ENCODE measurements at regions of chr17 and their contacts with region 1.

Region 1: DNA sequence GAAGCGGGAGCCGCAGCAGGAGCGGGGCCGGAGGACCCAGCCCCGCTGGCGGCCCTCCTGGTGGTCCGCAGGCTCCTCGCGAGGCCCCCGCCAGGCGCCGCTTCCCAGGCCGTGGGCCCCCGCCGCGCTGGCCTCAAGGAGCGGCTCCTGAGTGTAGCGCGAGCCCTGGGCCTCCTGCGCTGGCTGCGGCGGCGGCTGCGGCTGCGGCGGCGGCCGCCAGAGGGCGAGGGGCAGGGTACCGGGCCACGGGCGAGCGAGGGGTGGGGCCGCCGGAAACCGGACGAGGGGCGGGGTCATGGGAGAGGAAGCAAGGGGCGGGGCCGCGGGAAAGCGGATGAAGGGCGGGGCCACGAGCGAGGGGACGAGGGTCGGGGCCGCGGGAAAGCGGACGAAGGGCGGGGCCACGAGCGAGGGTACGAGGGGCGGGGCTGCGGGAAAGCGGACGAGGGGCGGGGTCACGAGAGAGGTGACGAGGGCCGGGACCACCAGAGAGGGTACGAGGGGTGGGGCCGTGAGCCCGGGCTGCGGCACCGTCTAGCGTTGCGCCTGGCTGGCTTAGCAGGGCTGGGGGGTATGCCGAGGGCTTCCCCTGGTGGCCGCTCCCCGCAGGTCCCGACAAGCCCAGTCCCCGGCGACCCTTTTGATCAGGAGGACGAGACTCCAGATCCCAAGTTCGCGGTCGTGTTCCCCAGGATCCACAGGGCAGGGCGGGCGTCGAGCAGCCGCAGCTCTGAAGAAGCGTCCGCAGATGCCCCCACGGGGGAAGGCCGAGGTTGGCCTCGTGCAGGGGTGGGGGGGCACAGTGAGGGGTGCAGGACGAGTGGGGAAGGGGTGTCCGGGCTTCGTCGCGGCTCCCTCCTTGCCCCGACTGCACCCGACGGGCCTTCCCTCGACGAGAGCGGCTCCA is 1.7 kb downstream of the MYO15B start:
- DNase-seq: peak; percentile 64
- ATAC-seq: peak; percentile 97
- H3K4me3 ChIP-seq: peak overlapping the region; percentile 59
- H3K27ac ChIP-seq: peak overlapping the region; percentile 20; the same call in 1 of the 2 replicates
- H3K4me1 ChIP-seq: no peaks in the 10 kb centered on the region
- H3K27me3 ChIP-seq: peaks cover 29% of the 10 kb centered on the region
- CTCF ChIP-seq: peak; percentile 64
- POLR2A ChIP-seq: no peak
- RAD21 ChIP-seq: peak; percentile 32

Region 2: GRCh38 chr17:75515496-75516254 is 73.6 kb before region 1 on chr17 and contains the start of gene CASKIN2:
- CTCF ChIA-PET with region 1: no interaction called
- POLR2A ChIA-PET with region 1: interaction called, 3 read pairs
- dilution Hi-C with region 1: no loop called
- in situ Hi-C with region 1: no loop called
- intact Hi-C with region 1: loop called (anchors 2 kb)
- DNase-seq: peak; percentile 86
- ATAC-seq: peak; percentile 79
- H3K4me3 ChIP-seq: peak within 1 kb of the TSS; percentile 82
- H3K27ac ChIP-seq: peak within 1 kb of the TSS; percentile 51
- H3K4me1 ChIP-seq: peaks cover 10% of the 10 kb centered on the region; the same call in 1 of the 2 replicates
- H3K27me3 ChIP-seq: no peaks in the 10 kb centered on the region
- CTCF ChIP-seq: peak; percentile 100
- POLR2A ChIP-seq: no peak
- RAD21 ChIP-seq: peak; percentile 82
- total RNA-seq, gene CASKIN2: 2.2 and 2.9 TPM in 2 replicates

Region 3: GRCh38 chr17:76072148-76072858 is 483.0 kb after region 1 on chr17 and contains the start of gene SRP68:
- CTCF ChIA-PET with region 1: no interaction called
- POLR2A ChIA-PET with region 1: no interaction called
- dilution Hi-C with region 1: no loop called
- in situ Hi-C with region 1: no loop called
- intact Hi-C with region 1: no loop called
- DNase-seq: peak; percentile 91
- ATAC-seq: peak; percentile 100
- H3K4me3 ChIP-seq: peak within 1 kb of the TSS; percentile 93
- H3K27ac ChIP-seq: peak within 1 kb of the TSS; percentile 76
- H3K4me1 ChIP-seq: peaks cover 3% of the 10 kb centered on the region; the same call in 1 of the 2 replicates
- H3K27me3 ChIP-seq: peaks cover 36% of the 10 kb centered on the region
- CTCF ChIP-seq: no peak
- POLR2A ChIP-seq: peak; percentile 82
- RAD21 ChIP-seq: no peak
- total RNA-seq, gene SRP68: 47.1 and 47.2 TPM in 2 replicates

Measured in IMR-90 (cell line).